ENCODE measurements at regions of chr4 and their contacts with region 1.

Region 1: GRCh38 chr4:1683736-1684505 is at the start of gene FAM53A:
- H3K4me3 Mint-ChIP-seq: peak within 1 kb of the TSS; percentile 70
- H3K27ac Mint-ChIP-seq: peak within 1 kb of the TSS; percentile 67
- H3K4me1 Mint-ChIP-seq: peaks cover 13% of the 10 kb centered on the region
- H3K27me3 Mint-ChIP-seq: no peaks in the 10 kb centered on the region

Region 2: DNA sequence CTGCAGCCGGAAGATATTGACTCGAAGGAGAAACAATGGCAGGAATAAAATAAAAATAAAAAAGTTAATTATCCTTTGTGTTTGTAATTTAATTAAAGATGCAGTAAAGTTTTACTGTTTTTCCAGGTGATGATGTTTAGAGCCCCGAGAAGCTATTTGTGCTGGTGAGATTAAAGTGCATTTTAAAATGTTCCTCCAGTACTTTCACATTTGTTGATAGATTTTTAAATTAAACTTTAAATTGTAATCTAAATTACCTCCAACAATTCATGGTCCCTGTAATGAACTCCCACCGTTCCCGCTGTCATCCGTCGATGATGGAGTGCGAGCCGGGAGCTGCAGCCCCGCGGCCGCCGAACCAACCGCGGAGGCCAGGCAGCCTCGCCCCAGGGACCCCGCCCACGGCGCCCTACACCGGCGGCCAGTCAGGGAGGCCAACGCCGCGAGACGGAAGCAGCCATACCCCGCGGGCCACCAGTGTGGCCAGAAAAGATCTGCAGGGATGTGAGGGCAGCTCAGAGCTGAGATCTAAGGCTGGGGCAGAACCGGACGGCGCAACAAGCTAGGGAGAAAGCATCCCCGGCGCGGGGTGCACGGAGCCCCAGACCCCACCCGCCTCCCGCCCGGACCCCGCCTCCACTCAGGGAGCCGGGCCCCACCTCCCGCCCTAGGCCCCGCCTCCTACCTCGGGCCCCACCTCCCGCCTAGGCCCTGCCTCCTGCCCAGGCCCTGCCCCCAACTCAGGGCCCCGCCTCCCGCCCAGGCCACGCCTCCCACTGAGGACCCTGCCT is 103.8 kb before region 1 on chr4:
- intact Hi-C with region 1: loop called (anchors 2 kb)
- H3K4me3 Mint-ChIP-seq: peak overlapping the region; percentile 82
- H3K27ac Mint-ChIP-seq: peak overlapping the region; percentile 91
- H3K4me1 Mint-ChIP-seq: no peaks in the 10 kb centered on the region
- H3K27me3 Mint-ChIP-seq: peaks cover 2% of the 10 kb centered on the region

Region 3: GRCh38 chr4:2141762-2142451 is 458.0 kb after region 1 on chr4:
- intact Hi-C with region 1: no loop called
- H3K4me3 Mint-ChIP-seq: no peak overlapping the region
- H3K27ac Mint-ChIP-seq: no peak overlapping the region
- H3K4me1 Mint-ChIP-seq: peaks cover 9% of the 10 kb centered on the region
- H3K27me3 Mint-ChIP-seq: peaks cover 30% of the 10 kb centered on the region